IMR-90 (cell line): ENCODE measurements at regions of chr6 and their contacts with region 1.

Region 1: GRCh38 chr6:722077-722524 is 29.2 kb upstream of the EXOC2 start:
- DNase-seq: peak; percentile 90
- ATAC-seq: peak; percentile 99
- H3K4me3 ChIP-seq: no peak overlapping the region
- H3K27ac ChIP-seq: no peak overlapping the region
- H3K4me1 ChIP-seq: no peaks in the 10 kb centered on the region
- H3K27me3 ChIP-seq: peaks cover 6% of the 10 kb centered on the region; the same call in 1 of the 2 replicates
- CTCF ChIP-seq: peak; percentile 95
- POLR2A ChIP-seq: no peak
- RAD21 ChIP-seq: peak; percentile 71

Region 2: GRCh38 chr6:168865-169455 is 553.1 kb before region 1 on chr6:
- CTCF ChIA-PET with region 1: no interaction called
- POLR2A ChIA-PET with region 1: no interaction called
- dilution Hi-C with region 1: no loop called
- in situ Hi-C with region 1: no loop called
- intact Hi-C with region 1: no loop called
- DNase-seq: peak; percentile 55
- ATAC-seq: peak; percentile 72
- H3K4me3 ChIP-seq: no peak overlapping the region
- H3K27ac ChIP-seq: no peak overlapping the region
- H3K4me1 ChIP-seq: no peaks in the 10 kb centered on the region
- H3K27me3 ChIP-seq: peaks cover 6% of the 10 kb centered on the region; the same call in 1 of the 2 replicates
- CTCF ChIP-seq: peak; percentile 59
- POLR2A ChIP-seq: no peak
- RAD21 ChIP-seq: peak; percentile 52

Region 3: DNA sequence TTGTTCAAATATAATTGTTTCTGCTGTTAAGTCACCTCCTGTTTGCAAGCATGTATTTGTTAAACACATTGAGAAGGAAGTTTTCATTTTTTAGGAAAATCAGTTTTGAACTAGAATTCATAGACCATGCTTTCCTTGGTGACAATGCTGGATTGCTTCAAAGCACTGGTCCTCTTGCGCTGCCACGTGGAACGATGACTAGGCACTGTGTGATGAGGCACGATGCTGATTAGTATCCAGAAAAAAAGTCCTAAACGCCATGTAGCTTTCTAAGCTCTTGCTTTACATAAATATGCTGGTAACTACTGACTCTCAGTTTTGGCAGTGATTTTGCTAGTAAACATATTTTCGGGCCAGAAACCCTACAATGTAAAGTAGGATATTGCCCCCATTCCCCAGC is 18.1 kb before region 1 on chr6:
- CTCF ChIA-PET with region 1: interaction called, 11 read pairs
- POLR2A ChIA-PET with region 1: no interaction called
- dilution Hi-C with region 1: no loop called
- in situ Hi-C with region 1: no loop called
- intact Hi-C with region 1: no loop called
- DNase-seq: peak; percentile 86
- ATAC-seq: peak; percentile 79
- H3K4me3 ChIP-seq: no peak overlapping the region
- H3K27ac ChIP-seq: no peak overlapping the region
- H3K4me1 ChIP-seq: peaks cover 7% of the 10 kb centered on the region
- H3K27me3 ChIP-seq: no peaks in the 10 kb centered on the region; the same call in 1 of the 2 replicates
- CTCF ChIP-seq: no peak
- POLR2A ChIP-seq: no peak
- RAD21 ChIP-seq: no peak

Region 4: DNA sequence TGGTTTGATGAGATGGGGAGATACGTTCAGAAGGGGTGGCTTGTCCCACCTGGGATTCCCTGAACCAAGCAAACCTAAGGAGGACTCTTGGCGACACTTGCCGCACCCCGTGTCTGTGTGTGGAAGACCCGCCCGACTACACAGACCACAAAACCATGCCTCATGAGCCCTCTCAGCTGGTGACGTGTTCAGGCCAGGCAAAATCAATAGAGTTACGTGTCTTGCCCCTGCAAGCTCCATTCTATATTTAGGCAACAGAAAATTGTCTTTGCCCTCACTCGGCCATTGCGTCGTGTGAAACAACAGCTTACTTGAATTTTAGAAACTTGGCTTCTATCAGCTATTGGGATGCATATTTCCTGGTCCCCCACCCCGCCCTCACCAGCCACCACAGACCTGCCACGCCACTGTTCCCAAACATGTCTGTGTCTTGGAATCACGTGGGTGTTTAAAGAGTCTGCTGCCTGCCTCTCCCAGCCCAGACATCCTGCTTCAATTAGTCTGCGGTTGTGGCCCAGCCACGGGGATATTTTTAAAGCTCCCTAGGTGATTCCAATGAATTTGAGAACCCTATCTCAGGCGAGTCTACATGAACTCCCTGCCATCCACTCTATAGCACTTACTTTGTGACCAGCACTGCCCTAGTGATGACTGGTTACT is 250.0 kb after region 1 on chr6:
- CTCF ChIA-PET with region 1: no interaction called
- POLR2A ChIA-PET with region 1: no interaction called
- dilution Hi-C with region 1: no loop called
- in situ Hi-C with region 1: no loop called
- intact Hi-C with region 1: no loop called
- DNase-seq: no peak
- ATAC-seq: no peak
- H3K4me3 ChIP-seq: no peak overlapping the region
- H3K27ac ChIP-seq: no peak overlapping the region
- H3K4me1 ChIP-seq: no peaks in the 10 kb centered on the region
- H3K27me3 ChIP-seq: peaks cover 11% of the 10 kb centered on the region
- CTCF ChIP-seq: no peak
- POLR2A ChIP-seq: no peak
- RAD21 ChIP-seq: no peak

Region 5: GRCh38 chr6:1113921-1114420 is 391.9 kb after region 1 on chr6:
- CTCF ChIA-PET with region 1: no interaction called
- POLR2A ChIA-PET with region 1: no interaction called
- dilution Hi-C with region 1: no loop called
- in situ Hi-C with region 1: no loop called
- intact Hi-C with region 1: no loop called
- DNase-seq: no peak
- ATAC-seq: no peak; the same call in 1 of the 2 replicates
- H3K4me3 ChIP-seq: no peak overlapping the region
- H3K27ac ChIP-seq: no peak overlapping the region
- H3K4me1 ChIP-seq: peaks cover 2% of the 10 kb centered on the region; the same call in 1 of the 2 replicates
- H3K27me3 ChIP-seq: peaks cover 2% of the 10 kb centered on the region; the same call in 1 of the 2 replicates
- CTCF ChIP-seq: no peak
- POLR2A ChIP-seq: no peak
- RAD21 ChIP-seq: no peak

Region 6: GRCh38 chr6:1381481-1382330 is 659.6 kb after region 1 on chr6:
- CTCF ChIA-PET with region 1: no interaction called
- POLR2A ChIA-PET with region 1: no interaction called
- dilution Hi-C with region 1: no loop called
- in situ Hi-C with region 1: no loop called
- intact Hi-C with region 1: loop called (anchors 2 kb)
- DNase-seq: no peak
- ATAC-seq: peak; percentile 94
- H3K4me3 ChIP-seq: peak overlapping the region; percentile 44
- H3K27ac ChIP-seq: no peak overlapping the region
- H3K4me1 ChIP-seq: peaks cover 8% of the 10 kb centered on the region; the same call in 1 of the 2 replicates
- H3K27me3 ChIP-seq: peaks cover 46% of the 10 kb centered on the region
- CTCF ChIP-seq: peak; percentile 76
- POLR2A ChIP-seq: 0 out of 2 replicates have a peak, but pooled peaks have one; percentile 24
- RAD21 ChIP-seq: peak; percentile 87

Region 7: GRCh38 chr6:1396952-1397868 is 675.1 kb after region 1 on chr6:
- CTCF ChIA-PET with region 1: no interaction called
- POLR2A ChIA-PET with region 1: no interaction called
- dilution Hi-C with region 1: no loop called
- in situ Hi-C with region 1: loop called (anchors 10 kb)
- intact Hi-C with region 1: loop called (anchors 5 kb)
- DNase-seq: peak; percentile 98
- ATAC-seq: peak; percentile 55
- H3K4me3 ChIP-seq: no peak overlapping the region
- H3K27ac ChIP-seq: no peak overlapping the region
- H3K4me1 ChIP-seq: peaks cover 19% of the 10 kb centered on the region
- H3K27me3 ChIP-seq: no peaks in the 10 kb centered on the region; the same call in 1 of the 2 replicates
- CTCF ChIP-seq: peak; percentile 98
- POLR2A ChIP-seq: peak; percentile 46; the same call in 1 of the 2 replicates
- RAD21 ChIP-seq: peak; percentile 93

Region 8: DNA sequence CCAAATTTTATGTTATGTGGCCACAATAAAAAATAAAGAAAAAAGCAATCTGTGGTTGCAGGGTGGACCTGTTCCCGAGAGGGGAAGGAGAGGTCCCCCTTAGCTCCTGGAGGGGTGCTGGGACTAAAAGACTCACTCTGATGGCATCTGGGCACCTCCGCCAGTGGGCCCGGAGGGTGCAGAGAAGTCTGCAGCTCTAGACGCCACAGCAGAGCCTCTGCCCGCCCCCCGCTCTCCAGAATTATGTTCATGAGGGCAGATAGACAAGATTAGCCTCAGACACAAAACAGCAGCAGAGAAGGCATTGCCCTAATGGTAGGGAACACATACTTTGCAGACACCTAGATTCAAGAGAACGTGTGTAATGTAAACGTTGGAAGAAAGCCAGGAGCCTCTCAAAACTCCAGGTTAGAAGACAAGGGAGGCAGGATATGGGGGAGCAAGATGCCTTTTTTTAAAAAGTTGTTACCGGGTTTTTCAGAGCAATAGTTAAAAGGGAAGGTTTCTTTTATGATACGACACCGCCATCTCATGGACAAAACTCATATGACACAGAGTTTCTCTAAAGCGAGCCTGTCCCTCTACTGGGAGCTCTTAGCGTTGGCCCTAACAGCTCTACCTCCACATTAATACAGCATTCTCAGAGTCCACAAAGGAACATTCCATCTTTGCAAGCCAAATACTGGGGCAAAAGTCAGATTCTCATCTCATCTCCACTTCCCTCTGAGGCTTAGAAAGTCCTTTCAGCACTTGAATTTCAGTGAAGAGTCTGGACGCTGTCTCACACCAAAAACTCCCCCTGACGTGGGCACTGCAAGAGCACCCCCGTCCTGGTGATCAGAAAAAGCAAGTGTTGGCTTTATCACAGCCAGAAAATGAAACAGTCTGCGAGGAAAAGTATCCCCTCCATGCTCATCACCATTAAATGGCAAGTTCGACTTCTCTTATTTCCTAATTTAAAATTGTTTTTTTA is 714.5 kb after region 1 on chr6:
- CTCF ChIA-PET with region 1: interaction called, 3 read pairs
- POLR2A ChIA-PET with region 1: no interaction called
- dilution Hi-C with region 1: no loop called
- in situ Hi-C with region 1: no loop called
- intact Hi-C with region 1: loop called (anchors 1 kb)
- DNase-seq: peak; percentile 72
- ATAC-seq: peak; percentile 99
- H3K4me3 ChIP-seq: no peak overlapping the region
- H3K27ac ChIP-seq: no peak overlapping the region
- H3K4me1 ChIP-seq: no peaks in the 10 kb centered on the region
- H3K27me3 ChIP-seq: peaks cover 20% of the 10 kb centered on the region
- CTCF ChIP-seq: peak; percentile 90
- POLR2A ChIP-seq: no peak
- RAD21 ChIP-seq: peak; percentile 84